Breast epithelium (tissue), 4 donors: ENCODE measurements at regions of chr11 and their contacts with region 1.

Region 1: DNA sequence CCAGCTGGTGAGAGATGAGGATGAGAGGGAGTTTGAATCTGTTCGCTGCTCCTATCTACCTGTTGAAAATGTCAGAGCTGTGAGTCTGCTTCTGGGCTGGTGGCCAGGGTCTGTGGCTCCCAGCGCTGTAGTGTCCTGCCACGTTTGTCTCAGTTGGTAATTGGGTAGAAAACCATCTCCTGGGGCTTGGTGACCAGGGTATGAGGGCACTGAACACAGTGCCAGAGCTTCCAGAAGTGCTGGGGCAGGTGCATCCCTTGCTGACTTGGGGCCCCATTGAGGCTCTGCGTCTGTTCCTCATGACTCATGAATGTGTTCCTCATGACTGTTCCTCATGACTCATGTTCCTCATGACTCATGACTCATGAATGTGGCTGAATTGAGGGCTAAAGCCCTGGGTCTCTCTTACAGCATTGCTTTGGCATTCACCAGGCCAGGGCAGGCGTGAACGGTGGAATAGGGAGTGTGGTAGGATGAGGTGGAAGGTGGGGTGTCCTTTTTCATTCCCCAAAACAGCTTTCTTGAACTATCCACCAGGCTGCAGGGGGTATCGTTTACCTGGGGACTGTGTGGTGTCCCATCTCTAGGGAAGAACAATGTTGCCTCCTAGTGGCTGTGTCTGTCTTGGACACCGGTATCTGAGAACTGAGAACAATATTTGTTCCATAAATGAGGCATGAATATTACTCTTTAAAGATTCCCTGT is 139.5 kb downstream of the COMMD9 start:
- DNase-seq: peak in 1 of 2 donors; percentile 74
- H3K4me3 ChIP-seq: no peak overlapping the region
- H3K27ac ChIP-seq: peak overlapping the region; percentile 75 to 79
- H3K4me1 ChIP-seq: peaks cover 0 to 7% of the 10 kb centered on the region in 2 donors
- H3K27me3 ChIP-seq: no peaks in the 10 kb centered on the region
- CTCF ChIP-seq: peak in 2 of 3 donors; percentile 39 to 51
- POLR2A ChIP-seq: no peak

Region 2: GRCh38 chr11:35077709-35078469 is 1071.8 kb before region 1 on chr11:
- intact Hi-C with region 1: loop called (anchors 10 kb)
- DNase-seq: no peak
- H3K4me3 ChIP-seq: no peak overlapping the region
- H3K27ac ChIP-seq: no peak overlapping the region
- H3K4me1 ChIP-seq: no peaks in the 10 kb centered on the region
- H3K27me3 ChIP-seq: no peaks in the 10 kb centered on the region
- CTCF ChIP-seq: no peak
- POLR2A ChIP-seq: no peak

Region 3: DNA sequence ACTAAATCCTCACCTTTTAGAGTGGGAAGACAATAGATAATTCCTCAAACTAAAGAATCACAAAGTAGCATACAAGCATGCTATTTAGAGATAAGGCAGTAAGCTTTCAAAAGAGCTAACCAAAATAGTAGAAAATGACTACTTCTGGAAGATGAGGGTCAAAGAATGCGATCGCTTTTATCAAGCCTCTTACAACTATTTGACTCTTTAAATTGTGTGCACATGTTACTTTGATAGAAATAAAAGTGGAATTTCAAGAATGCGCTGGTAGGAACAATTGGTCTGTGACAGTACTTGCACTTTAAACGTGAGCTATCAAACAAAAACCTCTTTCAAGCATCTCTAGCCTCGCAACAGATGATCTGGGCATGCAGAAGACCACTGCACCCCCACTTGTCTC is 42.3 kb after region 1 on chr11:
- intact Hi-C with region 1: loop called (anchors 2 kb)
- DNase-seq: no peak
- H3K4me3 ChIP-seq: no peak overlapping the region
- H3K27ac ChIP-seq: no peak overlapping the region
- H3K4me1 ChIP-seq: no peaks in the 10 kb centered on the region
- H3K27me3 ChIP-seq: no peaks in the 10 kb centered on the region
- CTCF ChIP-seq: no peak
- POLR2A ChIP-seq: no peak